ENCODE measurements at regions of chr1 and their contacts with region 1.

Region 1: GRCh38 chr1:11629184-11630016 is 24.8 kb downstream of the FBXO2 start:
- DNase-seq: no peak
- H3K4me3 ChIP-seq: no peak overlapping the region
- H3K27ac ChIP-seq: no peak overlapping the region
- H3K4me1 ChIP-seq: no peaks in the 10 kb centered on the region
- H3K27me3 ChIP-seq: peaks cover 25% of the 10 kb centered on the region
- CTCF ChIP-seq: no peak
- EP300 ChIP-seq: no peak
- POLR2A ChIP-seq: no peak

Region 2: GRCh38 chr1:11037740-11038182 is 591.6 kb before region 1 on chr1:
- in situ Hi-C with region 1: loop called in 3 of 4 experiments (anchors 10 to 25 kb)
- intact Hi-C with region 1: no loop called
- DNase-seq: peak; percentile 91
- H3K4me3 ChIP-seq: no peak overlapping the region
- H3K27ac ChIP-seq: no peak overlapping the region
- H3K4me1 ChIP-seq: peaks cover 0 to 9% (median 3%) of the 10 kb centered on the region in 4 donors
- H3K27me3 ChIP-seq: no peaks in the 10 kb centered on the region
- CTCF ChIP-seq: peak; percentile 90 to 96 (median 94)
- EP300 ChIP-seq: no peak
- POLR2A ChIP-seq: no peak